PC-3 (cell line): ENCODE measurements at regions of chr19 and their contacts with region 1.

Region 1: DNA sequence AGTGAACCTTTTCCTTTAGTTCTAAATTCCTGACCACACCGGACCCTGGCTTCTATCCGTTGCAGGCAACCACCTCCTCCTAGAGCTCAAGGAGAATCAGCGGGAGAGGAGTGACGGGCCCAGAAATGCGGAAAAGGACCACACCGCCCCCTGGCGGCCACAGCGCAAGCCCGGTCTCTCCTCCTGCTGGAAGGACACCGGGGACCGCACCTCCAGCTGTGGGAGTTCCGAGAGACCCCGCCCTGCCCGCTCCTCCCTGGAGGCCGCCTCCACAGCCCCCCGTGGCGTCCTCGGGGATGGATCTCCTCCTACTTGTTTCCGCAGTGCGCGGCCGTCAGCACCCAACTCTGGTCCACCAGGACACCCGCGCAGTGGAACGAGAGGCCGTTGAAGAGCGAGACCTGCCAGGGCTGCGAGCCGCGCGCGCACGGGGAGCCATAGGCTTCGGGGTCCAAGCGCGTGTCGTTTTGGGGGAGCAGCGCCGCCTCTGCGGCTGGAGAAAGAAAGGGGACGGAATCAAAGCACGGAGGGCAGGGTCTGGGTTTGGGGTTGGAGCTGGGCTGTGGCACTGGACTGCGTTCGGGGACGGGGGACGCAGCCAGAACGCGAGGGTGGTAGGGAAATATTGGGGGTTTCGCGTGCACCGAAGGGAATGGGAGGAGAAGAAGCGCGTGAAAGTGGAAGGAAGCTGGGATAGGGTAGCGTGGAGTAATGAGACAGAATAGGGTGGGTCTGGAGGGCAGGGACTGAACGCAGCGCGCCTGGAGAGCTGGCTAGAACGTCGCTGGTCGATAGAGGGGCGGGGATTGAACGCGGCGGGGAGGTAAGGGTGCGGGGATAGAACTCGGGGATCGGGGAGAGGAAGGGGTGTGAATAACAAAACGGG is 2.5 kb downstream of the KLK10 start:
- DNase-seq: peak; percentile 95
- ATAC-seq: peak; percentile 74
- H3K4me3 ChIP-seq: peak overlapping the region; percentile 80
- H3K27ac ChIP-seq: no peak overlapping the region
- H3K4me1 ChIP-seq: peaks cover 24% of the 10 kb centered on the region
- H3K27me3 ChIP-seq: no peaks in the 10 kb centered on the region
- CTCF ChIP-seq: peak; percentile 98

Region 2: DNA sequence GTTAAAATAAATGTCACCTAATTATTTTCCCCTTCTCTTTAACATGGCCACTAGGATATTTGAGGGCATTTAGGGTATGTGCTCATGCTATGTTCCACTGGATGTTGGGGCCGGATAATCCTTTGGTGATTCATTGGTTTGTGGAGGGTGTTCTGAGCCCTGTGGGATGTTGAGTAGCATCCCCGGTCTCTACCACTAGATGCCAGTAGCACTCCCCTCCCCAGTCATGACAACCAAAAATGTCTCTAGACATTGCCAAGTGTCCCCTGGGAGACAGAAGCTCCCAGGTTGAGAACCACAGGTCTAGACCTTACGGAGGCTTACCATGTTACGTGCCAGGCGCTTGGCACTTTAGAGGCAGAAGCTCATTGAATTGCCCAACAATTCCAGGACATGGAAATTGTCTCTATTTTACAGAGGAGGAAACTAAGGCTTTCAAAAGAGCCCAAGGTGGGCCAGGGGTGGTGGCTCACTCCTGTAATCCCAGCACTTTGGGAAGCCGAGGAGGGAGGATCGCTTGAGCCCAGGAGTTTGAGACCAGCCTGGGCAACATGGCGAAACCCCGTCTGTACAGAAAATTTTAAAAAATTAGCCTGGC is 311.5 kb before region 1 on chr19:
- CTCF ChIA-PET with region 1: no interaction called
- POLR2A ChIA-PET with region 1: no interaction called
- intact Hi-C with region 1: loop called (anchors 5 kb)
- DNase-seq: peak; percentile 86
- ATAC-seq: peak; percentile 87
- H3K4me3 ChIP-seq: no peak overlapping the region
- H3K27ac ChIP-seq: no peak overlapping the region
- H3K4me1 ChIP-seq: peaks cover 15% of the 10 kb centered on the region
- H3K27me3 ChIP-seq: peaks cover 19% of the 10 kb centered on the region
- CTCF ChIP-seq: peak; percentile 89

Region 3: GRCh38 chr19:50896591-50897190 is 120.3 kb before region 1 on chr19:
- CTCF ChIA-PET with region 1: no interaction called
- POLR2A ChIA-PET with region 1: no interaction called
- intact Hi-C with region 1: no loop called
- DNase-seq: peak; percentile 75
- ATAC-seq: peak; percentile 87
- H3K4me3 ChIP-seq: no peak overlapping the region
- H3K27ac ChIP-seq: no peak overlapping the region
- H3K4me1 ChIP-seq: peaks cover 13% of the 10 kb centered on the region
- H3K27me3 ChIP-seq: no peaks in the 10 kb centered on the region
- CTCF ChIP-seq: no peak

Region 4: DNA sequence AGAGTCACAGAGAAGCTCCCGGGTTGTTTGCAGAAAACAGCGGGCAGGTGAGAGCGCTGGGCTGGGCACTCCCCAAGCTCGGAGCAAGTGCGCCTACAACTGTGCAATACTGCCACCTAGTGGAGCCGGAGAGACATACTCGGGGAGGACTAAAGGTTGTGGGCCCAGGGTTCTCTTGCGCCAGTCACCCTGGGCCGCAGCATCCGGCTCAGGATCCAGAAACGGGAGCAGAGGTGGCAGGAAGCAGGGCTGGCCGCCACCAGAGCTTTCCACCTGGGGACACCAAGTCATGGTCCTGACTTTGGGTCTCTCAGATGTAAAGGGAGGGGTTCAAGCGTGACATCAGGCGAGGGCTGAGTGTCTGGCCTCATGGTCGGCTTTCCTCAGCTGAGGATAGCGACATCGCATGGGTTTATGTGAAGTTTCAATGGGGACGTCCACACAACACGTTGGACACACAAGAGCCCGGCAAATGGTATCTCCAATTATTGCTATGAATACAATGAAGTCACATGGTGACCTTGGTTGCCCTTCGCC is 94.7 kb before region 1 on chr19:
- CTCF ChIA-PET with region 1: interaction called, 15 read pairs
- POLR2A ChIA-PET with region 1: no interaction called
- intact Hi-C with region 1: no loop called
- DNase-seq: peak; percentile 96
- ATAC-seq: peak; percentile 100
- H3K4me3 ChIP-seq: peak overlapping the region; percentile 36; the same call in 1 of the 2 replicates
- H3K27ac ChIP-seq: no peak overlapping the region
- H3K4me1 ChIP-seq: peaks cover 26% of the 10 kb centered on the region
- H3K27me3 ChIP-seq: peaks cover 11% of the 10 kb centered on the region
- CTCF ChIP-seq: peak; percentile 98

Region 5: GRCh38 chr19:51047031-51047335 is 29.9 kb after region 1 on chr19:
- CTCF ChIA-PET with region 1: no interaction called
- POLR2A ChIA-PET with region 1: interaction called, 10 read pairs
- intact Hi-C with region 1: no loop called
- DNase-seq: no peak
- ATAC-seq: no peak
- H3K4me3 ChIP-seq: no peak overlapping the region
- H3K27ac ChIP-seq: no peak overlapping the region
- H3K4me1 ChIP-seq: no peaks in the 10 kb centered on the region
- H3K27me3 ChIP-seq: no peaks in the 10 kb centered on the region
- CTCF ChIP-seq: no peak

Region 6: GRCh38 chr19:51097166-51097738 is 80.2 kb after region 1 on chr19:
- CTCF ChIA-PET with region 1: interaction called, 79 read pairs
- POLR2A ChIA-PET with region 1: no interaction called
- intact Hi-C with region 1: loop called (anchors 1 kb)
- DNase-seq: peak; percentile 77
- ATAC-seq: peak; percentile 40
- H3K4me3 ChIP-seq: no peak overlapping the region
- H3K27ac ChIP-seq: no peak overlapping the region
- H3K4me1 ChIP-seq: peaks cover 28% of the 10 kb centered on the region
- H3K27me3 ChIP-seq: no peaks in the 10 kb centered on the region
- CTCF ChIP-seq: peak; percentile 79

Region 7: DNA sequence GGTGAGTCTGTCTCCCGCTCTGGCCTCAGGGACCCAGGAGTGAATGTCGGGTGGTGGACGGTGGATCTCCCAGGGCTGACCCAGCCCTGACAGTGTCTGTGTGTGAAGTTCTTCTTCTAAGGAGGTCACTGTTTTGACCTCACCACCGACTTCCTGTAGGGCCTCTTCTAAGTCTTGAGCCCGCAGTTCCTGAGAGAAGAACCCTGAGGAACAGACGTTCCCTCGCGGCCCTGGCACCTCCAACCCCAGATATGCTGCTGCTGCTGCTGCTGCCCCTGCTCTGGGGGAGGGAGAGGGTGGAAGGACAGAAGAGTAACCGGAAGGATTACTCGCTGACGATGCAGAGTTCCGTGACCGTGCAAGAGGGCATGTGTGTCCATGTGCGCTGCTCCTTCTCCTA is 125.1 kb after region 1 on chr19 and contains the start of gene SIGLEC7:
- CTCF ChIA-PET with region 1: no interaction called
- POLR2A ChIA-PET with region 1: no interaction called
- intact Hi-C with region 1: no loop called
- DNase-seq: no peak
- ATAC-seq: no peak
- H3K4me3 ChIP-seq: no peak within 1 kb of the TSS
- H3K27ac ChIP-seq: no peak within 1 kb of the TSS
- H3K4me1 ChIP-seq: no peaks in the 10 kb centered on the region
- H3K27me3 ChIP-seq: peaks cover 73% of the 10 kb centered on the region
- CTCF ChIP-seq: no peak
- total RNA-seq, gene SIGLEC7: not detected in 2 replicates